ENCODE measurements at regions of chr16 and their contacts with region 1.

Region 1: DNA sequence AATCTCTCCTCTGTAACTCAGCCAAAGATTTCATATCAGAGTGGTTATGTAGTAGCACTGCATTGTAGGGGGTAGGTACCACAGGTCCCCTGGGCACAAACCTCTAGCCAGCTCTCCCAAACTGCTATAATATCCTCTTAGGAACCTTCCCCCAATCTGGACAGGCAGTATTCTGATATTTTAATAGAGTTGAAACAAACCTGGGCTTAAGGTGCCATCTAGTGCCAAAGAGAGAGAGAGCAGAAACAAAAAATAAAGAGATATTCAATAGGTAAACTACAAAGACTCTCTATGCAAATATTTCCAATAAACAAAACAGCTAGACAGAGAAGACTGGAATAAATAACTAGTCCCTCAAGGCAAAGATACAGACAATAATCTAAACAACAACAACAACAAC is 1070.0 kb downstream of the CDH11 start:
- DNase-seq: peak in 1 of 2 experiments; percentile 13
- H3K4me3 ChIP-seq: no peak overlapping the region
- H3K4me3 Mint-ChIP-seq: no peak overlapping the region
- H3K27ac Mint-ChIP-seq: no peak overlapping the region
- H3K4me1 ChIP-seq: no peaks in the 10 kb centered on the region
- H3K4me1 Mint-ChIP-seq: no peaks in the 10 kb centered on the region
- H3K27me3 ChIP-seq: no peaks in the 10 kb centered on the region
- H3K27me3 Mint-ChIP-seq: peaks cover 3% of the 10 kb centered on the region
- CTCF ChIP-seq: peak; percentile 27 to 35

Region 2: DNA sequence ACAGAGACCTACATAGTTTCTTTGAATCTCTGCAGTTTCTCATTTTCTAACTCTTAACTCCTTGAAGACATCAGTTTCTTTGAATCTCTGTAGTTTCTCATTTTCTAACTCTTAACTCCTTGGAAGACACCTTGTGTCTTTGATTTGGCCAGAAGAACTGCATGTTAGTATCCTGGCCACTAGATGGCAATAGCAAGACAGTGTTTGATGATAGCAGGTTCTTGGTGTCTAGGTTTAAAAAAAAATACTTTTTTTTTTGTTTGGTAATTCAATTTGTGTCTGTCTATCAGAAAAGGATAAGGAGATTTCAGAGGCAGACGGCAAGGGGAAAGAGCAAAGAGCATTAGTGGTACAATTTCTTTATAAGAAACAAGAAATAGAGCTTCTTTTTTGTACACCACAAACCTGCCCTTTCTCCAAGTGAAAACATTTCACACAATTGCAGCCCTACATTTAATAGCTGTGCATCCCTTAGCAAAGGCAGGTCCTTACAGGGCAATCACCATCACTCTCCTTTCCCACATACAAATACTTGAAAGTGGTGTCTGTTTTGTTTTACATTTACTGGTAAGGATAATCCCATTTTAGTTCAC is 690.7 kb before region 1 on chr16:
- CTCF ChIA-PET with region 1: no interaction called
- POLR2A ChIA-PET with region 1: no interaction called
- intact Hi-C with region 1: loop called (anchors 1 kb)
- DNase-seq: peak; percentile 38 to 56
- H3K4me3 ChIP-seq: no peak overlapping the region
- H3K4me3 Mint-ChIP-seq: no peak overlapping the region
- H3K27ac Mint-ChIP-seq: no peak overlapping the region
- H3K4me1 ChIP-seq: no peaks in the 10 kb centered on the region
- H3K4me1 Mint-ChIP-seq: peaks cover 7% of the 10 kb centered on the region
- H3K27me3 ChIP-seq: no peaks in the 10 kb centered on the region
- H3K27me3 Mint-ChIP-seq: peaks cover 3% of the 10 kb centered on the region
- CTCF ChIP-seq: peak; percentile 67 to 91

Region 3: DNA sequence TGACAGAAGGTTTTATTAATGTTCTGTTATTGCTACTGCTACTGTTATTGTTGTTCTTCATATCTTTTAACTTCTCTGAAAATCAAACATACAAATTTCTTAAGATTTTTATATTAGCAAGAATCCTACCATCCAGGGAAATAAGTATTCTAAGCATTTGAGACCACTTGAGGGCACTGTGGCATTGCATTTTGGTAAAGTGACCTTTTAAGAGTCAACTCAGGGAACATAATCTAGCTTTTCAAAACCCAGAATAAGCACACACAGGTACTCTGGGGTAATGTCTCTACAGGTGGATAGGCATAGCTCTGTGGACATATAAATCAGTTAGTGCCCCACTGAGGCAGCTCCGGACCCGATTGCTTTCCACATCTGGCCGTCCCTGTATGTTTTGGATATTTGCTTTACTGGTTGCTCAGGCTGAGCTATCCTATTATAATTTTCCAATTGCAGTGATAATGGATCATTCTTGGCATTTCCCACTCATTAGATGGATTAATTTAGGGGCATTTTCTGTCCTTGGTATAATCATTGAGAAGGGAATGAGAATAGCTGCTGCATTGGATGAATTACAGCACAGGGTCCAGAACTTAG is 590.5 kb before region 1 on chr16:
- CTCF ChIA-PET with region 1: no interaction called
- POLR2A ChIA-PET with region 1: no interaction called
- intact Hi-C with region 1: loop called (anchors 1 kb)
- DNase-seq: peak; percentile 27 to 39
- H3K4me3 ChIP-seq: no peak overlapping the region
- H3K4me3 Mint-ChIP-seq: no peak overlapping the region
- H3K27ac Mint-ChIP-seq: no peak overlapping the region
- H3K4me1 ChIP-seq: no peaks in the 10 kb centered on the region
- H3K4me1 Mint-ChIP-seq: no peaks in the 10 kb centered on the region
- H3K27me3 ChIP-seq: no peaks in the 10 kb centered on the region
- H3K27me3 Mint-ChIP-seq: no peaks in the 10 kb centered on the region
- CTCF ChIP-seq: peak; percentile 45 to 52

Region 4: DNA sequence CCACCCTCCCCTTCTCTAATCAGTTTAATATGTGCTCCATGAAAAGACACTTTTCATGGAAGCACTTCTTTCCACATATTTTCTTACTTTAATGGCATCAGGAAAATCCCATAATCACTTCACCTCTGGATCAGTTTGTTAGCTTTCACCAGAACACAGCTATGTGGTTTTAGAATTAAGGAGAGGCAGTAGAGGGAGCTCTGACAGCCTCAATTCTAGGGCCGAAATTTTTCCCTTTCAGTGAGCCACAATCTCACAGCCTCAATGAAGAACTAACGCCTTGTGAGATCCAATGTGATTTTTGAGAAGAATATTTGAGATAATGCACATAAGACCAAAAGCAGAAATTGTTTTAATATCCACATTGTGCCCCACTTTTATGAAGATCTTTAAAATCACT is 521.6 kb before region 1 on chr16:
- CTCF ChIA-PET with region 1: no interaction called
- POLR2A ChIA-PET with region 1: no interaction called
- intact Hi-C with region 1: loop called (anchors 1 kb)
- DNase-seq: no peak
- H3K4me3 ChIP-seq: no peak overlapping the region
- H3K4me3 Mint-ChIP-seq: no peak overlapping the region
- H3K27ac Mint-ChIP-seq: no peak overlapping the region
- H3K4me1 ChIP-seq: no peaks in the 10 kb centered on the region
- H3K4me1 Mint-ChIP-seq: no peaks in the 10 kb centered on the region
- H3K27me3 ChIP-seq: no peaks in the 10 kb centered on the region
- H3K27me3 Mint-ChIP-seq: peaks cover 2% of the 10 kb centered on the region
- CTCF ChIP-seq: peak in 1 of 2 experiments; percentile 19

Region 5: DNA sequence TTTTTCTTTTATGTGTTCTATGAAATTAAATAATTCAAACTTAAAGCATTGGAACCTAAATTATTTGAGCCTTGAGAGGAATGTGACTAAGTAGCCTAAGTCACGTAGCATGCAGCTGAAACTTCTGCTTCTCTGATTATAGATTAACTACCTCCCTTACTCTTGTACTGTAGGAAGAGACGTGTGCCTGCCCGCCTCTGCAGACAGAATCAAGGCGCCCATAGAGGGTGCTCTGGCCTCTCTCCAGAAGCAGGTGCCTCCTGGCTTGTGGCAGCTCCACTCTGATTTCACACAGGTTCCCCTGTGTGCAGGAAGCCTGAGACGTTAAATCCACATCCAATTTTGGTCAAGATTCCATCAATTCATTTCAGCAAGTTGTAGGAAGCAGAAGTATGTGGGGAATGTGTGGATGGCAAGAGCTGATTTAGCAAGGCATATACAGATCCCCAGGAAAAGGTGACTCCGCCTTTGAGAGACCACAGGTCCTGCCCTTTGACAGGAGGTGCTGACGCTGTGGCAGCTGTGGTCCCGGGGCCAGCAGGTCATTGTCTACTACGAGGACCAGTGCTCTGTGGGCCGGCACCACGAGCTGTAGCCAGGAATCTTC is 348.7 kb before region 1 on chr16:
- CTCF ChIA-PET with region 1: no interaction called
- POLR2A ChIA-PET with region 1: no interaction called
- intact Hi-C with region 1: loop called (anchors 10 kb)
- DNase-seq: peak; percentile 48 to 55
- H3K4me3 ChIP-seq: no peak overlapping the region
- H3K4me3 Mint-ChIP-seq: no peak overlapping the region
- H3K27ac Mint-ChIP-seq: no peak overlapping the region
- H3K4me1 ChIP-seq: peaks cover 5% of the 10 kb centered on the region; the same call in 1 of the 2 replicates
- H3K4me1 Mint-ChIP-seq: peaks cover 6% of the 10 kb centered on the region
- H3K27me3 ChIP-seq: no peaks in the 10 kb centered on the region
- H3K27me3 Mint-ChIP-seq: no peaks in the 10 kb centered on the region
- CTCF ChIP-seq: peak in 1 of 2 experiments; percentile 38

Region 6: GRCh38 chr16:64004116-64004515 is 47.7 kb before region 1 on chr16:
- CTCF ChIA-PET with region 1: no interaction called
- POLR2A ChIA-PET with region 1: no interaction called
- intact Hi-C with region 1: no loop called
- DNase-seq: no peak
- H3K4me3 ChIP-seq: no peak overlapping the region
- H3K4me3 Mint-ChIP-seq: no peak overlapping the region
- H3K27ac Mint-ChIP-seq: no peak overlapping the region
- H3K4me1 ChIP-seq: 0 out of 2 replicates have a peak, but pooled peaks cover 4% of the 10 kb centered on the region
- H3K4me1 Mint-ChIP-seq: no peaks in the 10 kb centered on the region
- H3K27me3 ChIP-seq: no peaks in the 10 kb centered on the region
- H3K27me3 Mint-ChIP-seq: peaks cover 2% of the 10 kb centered on the region
- CTCF ChIP-seq: no peak

Measured in Caco-2 (cell line).